Prostate gland (tissue), 2 donors: ENCODE measurements at regions of chr6 and their contacts with region 1.

Region 1: GRCh38 chr6:3356056-3356761 is 97.5 kb downstream of the PSMG4 start:
- DNase-seq: peak; percentile 88
- H3K4me3 ChIP-seq: peak overlapping the region; percentile 13 to 22
- H3K27ac ChIP-seq: peak overlapping the region; percentile 94
- H3K4me1 ChIP-seq: peaks cover 26% of the 10 kb centered on the region
- H3K27me3 ChIP-seq: no peaks in the 10 kb centered on the region
- CTCF ChIP-seq: no peak
- POLR2A ChIP-seq: no peak

Region 2: DNA sequence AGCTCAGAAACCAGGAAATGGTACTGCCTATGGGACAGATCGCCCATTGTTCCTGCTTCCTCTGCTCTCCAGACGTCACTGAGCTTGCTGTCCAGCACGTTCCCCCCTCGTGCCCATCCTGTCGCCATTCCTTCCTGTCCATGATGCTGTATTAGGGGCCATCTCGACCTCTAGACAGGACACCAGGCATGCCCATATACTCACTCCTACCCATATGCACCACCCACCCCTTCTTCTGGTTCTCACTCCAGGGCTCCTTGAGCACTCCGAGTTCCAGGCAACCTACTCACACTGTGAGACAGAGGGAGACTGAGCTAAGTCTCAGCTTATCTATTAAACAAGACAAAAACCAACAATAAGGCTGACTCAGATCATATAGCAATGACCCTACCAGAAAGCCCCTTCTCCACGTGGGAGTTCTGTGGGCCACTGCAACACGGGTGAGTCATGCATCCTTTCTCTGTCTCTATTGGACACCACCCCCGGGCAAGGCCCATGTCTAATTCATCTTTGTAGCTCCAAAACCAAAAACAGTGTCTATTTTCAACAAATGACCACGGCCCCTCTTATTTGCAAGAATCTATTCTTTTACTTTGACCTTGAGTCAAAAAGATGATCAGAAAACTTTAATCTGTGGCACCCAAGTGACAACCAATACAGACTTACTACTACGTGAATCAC is 31.8 kb before region 1 on chr6:
- intact Hi-C with region 1: no loop called
- DNase-seq: no peak
- H3K4me3 ChIP-seq: no peak overlapping the region
- H3K27ac ChIP-seq: no peak overlapping the region
- H3K4me1 ChIP-seq: no peaks in the 10 kb centered on the region
- H3K27me3 ChIP-seq: no peaks in the 10 kb centered on the region
- CTCF ChIP-seq: no peak
- POLR2A ChIP-seq: no peak

Region 3: GRCh38 chr6:3456755-3457466 is 100.7 kb after region 1 on chr6 and contains the start of gene SLC22A23:
- intact Hi-C with region 1: loop called (anchors 5 kb)
- DNase-seq: peak; percentile 87
- H3K4me3 ChIP-seq: peak within 1 kb of the TSS; percentile 68
- H3K27ac ChIP-seq: peak within 1 kb of the TSS; percentile 84 to 88
- H3K4me1 ChIP-seq: no peaks in the 10 kb centered on the region
- H3K27me3 ChIP-seq: no peaks in the 10 kb centered on the region
- CTCF ChIP-seq: peak; percentile 74 to 94 (median 86)
- POLR2A ChIP-seq: peak; percentile 52
- total RNA-seq, gene SLC22A23: 53.1 to 129 TPM